Naive thymus-derived CD4-positive, alpha-beta T cell (primary cell): ENCODE measurements at regions of chr3 and their contacts with region 1.

Region 1: GRCh38 chr3:43246976-43247375 is 39.4 kb upstream of the SNRK start:
- DNase-seq: peak in 6 of 9 donors; percentile 33 to 62 (median 50)
- ATAC-seq: peak; percentile 66
- H3K4me3 ChIP-seq: no peak overlapping the region
- H3K4me3 Mint-ChIP-seq: peak overlapping the region; percentile 8 to 78 (median 61)
- H3K27ac ChIP-seq: peak overlapping the region; percentile 53
- H3K27ac Mint-ChIP-seq: peak overlapping the region; percentile 49 to 90 (median 80)
- H3K4me1 ChIP-seq: peaks cover 9 to 53% of the 10 kb centered on the region in 2 donors
- H3K4me1 Mint-ChIP-seq: peaks cover 35 to 69% (median 65%) of the 10 kb centered on the region in 7 donors
- H3K27me3 ChIP-seq: no peaks in the 10 kb centered on the region
- H3K27me3 Mint-ChIP-seq: peaks cover 0 to 4% (median 0%) of the 10 kb centered on the region in 5 donors

Region 2: DNA sequence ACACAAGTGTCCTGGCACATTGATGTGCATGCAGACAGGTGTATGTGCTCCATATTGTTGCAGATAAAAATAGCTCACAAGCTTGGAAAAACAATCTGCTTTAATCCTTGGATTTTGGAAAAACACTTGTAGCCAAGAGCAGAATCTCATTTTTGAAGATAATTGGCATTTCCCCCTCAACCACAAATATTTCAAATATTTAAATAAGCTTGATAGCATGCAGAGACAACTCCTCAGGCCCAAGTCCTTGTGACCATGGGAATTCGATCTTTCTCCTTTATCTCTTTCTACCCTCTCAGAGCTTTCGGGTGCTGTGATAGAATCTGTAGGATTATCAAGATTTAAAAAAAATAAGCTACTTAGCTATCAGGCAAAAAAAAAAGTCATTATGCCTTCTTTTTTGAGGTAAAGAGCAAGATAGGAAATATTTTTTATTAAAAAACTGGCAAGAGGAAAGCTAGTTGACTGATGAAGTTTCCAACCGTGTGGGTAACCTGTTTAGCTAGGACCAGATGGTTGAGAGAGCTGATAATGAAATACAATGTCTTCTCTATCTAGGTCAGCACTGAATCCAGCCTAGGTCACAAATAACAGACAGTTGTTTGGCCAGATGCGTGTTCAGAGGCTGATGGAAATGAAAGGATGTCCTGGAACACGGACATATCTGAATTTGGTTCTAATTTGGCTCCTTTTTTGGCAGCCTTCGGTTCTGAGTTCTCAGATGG is 15.5 kb before region 1 on chr3:
- CTCF ChIA-PET with region 1: interaction called, 3 read pairs
- POLR2A ChIA-PET with region 1: interaction called, 8 read pairs
- intact Hi-C with region 1: loop called in 1 of 2 experiments (anchors 2 kb)
- DNase-seq: no peak
- ATAC-seq: no peak
- H3K4me3 ChIP-seq: no peak overlapping the region
- H3K4me3 Mint-ChIP-seq: no peak overlapping the region
- H3K27ac ChIP-seq: no peak overlapping the region
- H3K27ac Mint-ChIP-seq: peak overlapping the region in 1 of 9 donors; percentile 11
- H3K4me1 ChIP-seq: peaks cover 0 to 2% of the 10 kb centered on the region in 2 donors
- H3K4me1 Mint-ChIP-seq: peaks cover 3 to 15% (median 5%) of the 10 kb centered on the region in 7 donors
- H3K27me3 ChIP-seq: no peaks in the 10 kb centered on the region
- H3K27me3 Mint-ChIP-seq: peaks cover 0 to 12% (median 0%) of the 10 kb centered on the region in 5 donors

Region 3: DNA sequence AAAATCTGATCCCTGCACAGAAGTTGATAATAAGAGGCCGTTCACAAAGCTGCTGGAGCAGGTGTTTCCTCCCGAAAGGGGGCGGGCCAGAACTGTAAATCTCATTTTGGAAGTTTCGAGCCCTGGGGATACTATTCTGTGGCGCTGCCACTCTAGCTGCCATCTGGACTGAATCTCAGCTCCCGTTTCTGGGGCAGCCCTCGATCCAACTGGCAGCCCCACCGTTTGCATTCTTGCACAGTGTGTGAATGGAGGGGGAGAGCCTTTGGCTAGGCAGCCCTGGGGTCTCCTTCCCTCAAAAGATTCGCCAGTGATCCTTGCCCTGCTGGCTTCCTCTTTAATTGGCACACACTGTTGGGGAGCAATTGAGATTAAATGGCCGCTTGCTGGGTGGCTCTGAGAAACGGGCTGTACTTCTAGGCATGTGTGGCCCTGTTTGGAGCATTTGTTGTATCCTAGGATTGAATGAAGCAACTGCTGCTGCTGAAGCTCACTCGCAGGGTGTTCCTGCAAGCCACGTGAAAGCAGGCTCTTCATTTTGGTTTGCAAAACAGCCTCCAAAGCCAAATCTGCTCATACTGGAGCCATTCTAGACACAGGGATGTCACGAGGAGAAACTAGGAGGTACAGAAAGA is 937.5 kb after region 1 on chr3:
- CTCF ChIA-PET with region 1: no interaction called
- POLR2A ChIA-PET with region 1: no interaction called
- intact Hi-C with region 1: no loop called
- DNase-seq: no peak
- ATAC-seq: no peak
- H3K4me3 ChIP-seq: no peak overlapping the region
- H3K4me3 Mint-ChIP-seq: no peak overlapping the region
- H3K27ac ChIP-seq: no peak overlapping the region
- H3K27ac Mint-ChIP-seq: no peak overlapping the region
- H3K4me1 ChIP-seq: no peaks in the 10 kb centered on the region
- H3K4me1 Mint-ChIP-seq: peaks cover 0 to 6% (median 0%) of the 10 kb centered on the region in 7 donors
- H3K27me3 ChIP-seq: no peaks in the 10 kb centered on the region
- H3K27me3 Mint-ChIP-seq: peaks cover 9 to 46% (median 14%) of the 10 kb centered on the region in 5 donors